Mammary epithelial cell (primary cell): ENCODE measurements at regions of chr2 and their contacts with region 1.

Region 1: DNA sequence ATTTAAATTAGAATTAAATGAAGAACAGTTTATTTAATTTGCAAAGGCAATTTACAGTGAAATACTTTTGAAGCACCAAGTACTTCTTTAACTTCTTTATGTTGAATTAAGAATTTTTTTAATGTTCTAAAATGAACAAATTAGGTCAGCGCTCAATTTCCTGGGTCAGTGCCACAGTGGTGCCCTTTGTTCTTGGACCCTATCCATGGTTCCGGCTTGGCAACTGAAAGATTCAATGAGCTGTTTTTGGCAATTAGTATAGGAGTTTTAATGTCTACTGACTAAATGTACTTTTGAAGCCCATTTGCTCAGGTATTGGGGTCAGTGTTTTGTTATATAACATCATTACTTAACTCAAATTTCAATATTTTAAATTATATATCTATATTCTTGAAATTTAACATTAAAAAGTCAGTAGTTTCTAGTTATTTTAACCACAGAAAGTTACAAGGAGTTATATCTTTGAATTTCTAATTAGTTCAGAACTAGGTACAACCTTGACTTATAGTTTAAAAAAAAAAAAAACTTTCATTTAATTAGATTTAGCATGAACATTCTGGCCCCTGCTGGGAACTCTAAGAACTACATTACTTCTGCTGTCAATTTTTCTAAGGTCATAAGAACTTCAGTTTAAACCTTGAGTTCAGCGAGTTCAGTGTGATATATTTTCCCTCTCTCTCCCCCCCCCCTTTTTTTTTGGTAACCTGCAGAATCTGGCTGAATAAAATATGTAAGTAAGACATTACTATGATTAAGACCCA is 7.6 kb upstream of the MSTN start:
- DNase-seq: peak; percentile 32
- H3K4me3 ChIP-seq: no peak overlapping the region
- H3K27ac ChIP-seq: no peak overlapping the region
- H3K4me1 ChIP-seq: no peaks in the 10 kb centered on the region
- H3K27me3 ChIP-seq: no peaks in the 10 kb centered on the region
- CTCF ChIP-seq: peak; percentile 52 to 63

Region 2: DNA sequence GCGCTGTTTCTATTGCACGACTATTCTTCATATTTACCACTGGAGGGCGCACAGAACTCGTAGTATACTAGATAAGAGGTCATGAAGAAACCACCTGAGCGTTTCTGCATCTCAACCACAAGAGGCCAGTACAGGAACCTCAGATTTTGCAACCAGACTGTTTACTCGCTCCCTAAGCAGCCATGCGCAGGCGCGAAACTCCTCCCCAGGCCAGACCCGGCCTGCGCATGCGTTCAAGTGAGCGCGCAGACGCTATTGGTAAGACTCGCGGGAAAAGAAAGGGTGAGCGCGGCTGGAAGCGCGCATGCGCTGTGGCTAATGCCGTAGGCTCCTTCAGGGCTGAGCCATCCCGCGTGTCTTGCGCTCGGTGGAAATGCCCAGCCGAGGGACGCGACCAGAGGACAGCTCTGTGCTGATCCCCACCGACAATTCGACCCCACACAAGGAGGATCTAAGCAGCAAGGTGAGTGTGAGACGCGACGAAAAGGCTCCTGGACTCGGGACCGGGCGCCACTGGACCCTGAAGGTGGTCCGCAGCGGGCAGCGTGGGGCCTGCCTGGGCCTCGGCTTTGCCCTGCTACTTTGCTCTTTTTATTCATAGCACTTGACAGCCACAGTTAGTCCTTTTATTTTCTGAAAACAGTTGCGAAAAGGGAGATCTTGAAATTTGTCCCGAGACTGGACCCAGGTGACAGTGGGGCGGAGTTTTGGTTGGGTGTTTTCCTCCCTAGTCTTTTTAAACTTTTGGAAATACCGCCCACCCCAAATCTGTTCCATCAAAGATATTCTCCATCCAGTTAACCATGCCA is 408.8 kb before region 1 on chr2 and contains the start of gene ASNSD1:
- CTCF ChIA-PET with region 1: no interaction called
- dilution Hi-C with region 1: no loop called
- in situ Hi-C with region 1: loop called in 1 of 2 experiments (anchors 25 kb)
- intact Hi-C with region 1: loop called (anchors 1 kb)
- DNase-seq: peak; percentile 99
- H3K4me3 ChIP-seq: peak within 1 kb of the TSS; percentile 70 to 98 (median 94)
- H3K27ac ChIP-seq: peak within 1 kb of the TSS; percentile 86
- H3K4me1 ChIP-seq: peaks cover 5% of the 10 kb centered on the region
- H3K27me3 ChIP-seq: peaks cover 2% of the 10 kb centered on the region
- CTCF ChIP-seq: peak; percentile 98 to 99
- total RNA-seq, gene ASNSD1: 24.2 to 43.3 TPM

Region 3: DNA sequence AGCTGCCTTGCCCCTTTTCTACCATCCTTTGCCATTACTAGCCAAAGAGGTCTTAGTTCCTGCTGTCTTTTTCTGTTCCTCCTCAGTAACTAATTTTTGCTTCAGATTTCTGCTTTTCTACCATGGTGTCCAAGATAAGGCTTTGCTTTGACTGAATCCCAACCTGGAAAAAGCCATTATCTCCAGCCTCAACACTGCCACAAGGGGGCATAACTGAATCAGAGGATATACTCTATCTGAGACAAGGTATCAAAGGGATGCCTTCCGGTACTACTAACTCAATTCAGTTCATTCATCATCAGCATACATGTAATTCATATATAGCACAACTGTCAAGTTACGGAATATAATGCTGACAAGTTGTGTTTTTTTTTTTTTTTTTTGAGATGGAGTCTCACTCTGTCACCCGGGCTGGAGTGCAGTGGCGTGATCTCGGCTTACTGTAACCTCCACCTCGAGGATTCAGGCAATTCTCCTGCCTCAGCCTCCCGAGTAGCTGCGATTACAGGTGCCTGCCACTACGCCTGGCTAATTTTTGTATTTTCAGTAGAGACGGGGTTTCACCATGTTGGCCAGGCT is 318.9 kb before region 1 on chr2:
- CTCF ChIA-PET with region 1: no interaction called
- dilution Hi-C with region 1: no loop called
- in situ Hi-C with region 1: no loop called
- intact Hi-C with region 1: loop called (anchors 2 kb)
- DNase-seq: peak; percentile 20
- H3K4me3 ChIP-seq: no peak overlapping the region
- H3K27ac ChIP-seq: no peak overlapping the region
- H3K4me1 ChIP-seq: no peaks in the 10 kb centered on the region
- H3K27me3 ChIP-seq: no peaks in the 10 kb centered on the region
- CTCF ChIP-seq: peak; percentile 75 to 77

Region 4: GRCh38 chr2:189762551-189763298 is 307.4 kb before region 1 on chr2 and contains the start of gene OSGEPL1:
- CTCF ChIA-PET with region 1: interaction called, 10 read pairs
- dilution Hi-C with region 1: no loop called
- in situ Hi-C with region 1: no loop called
- intact Hi-C with region 1: no loop called
- DNase-seq: peak; percentile 94
- H3K4me3 ChIP-seq: peak within 1 kb of the TSS; percentile 66 to 96 (median 92)
- H3K27ac ChIP-seq: peak within 1 kb of the TSS; percentile 70
- H3K4me1 ChIP-seq: peaks cover 6% of the 10 kb centered on the region
- H3K27me3 ChIP-seq: no peaks in the 10 kb centered on the region
- CTCF ChIP-seq: peak; percentile 26 to 65
- total RNA-seq, gene OSGEPL1: 4.6 to 8.8 TPM

Region 5: DNA sequence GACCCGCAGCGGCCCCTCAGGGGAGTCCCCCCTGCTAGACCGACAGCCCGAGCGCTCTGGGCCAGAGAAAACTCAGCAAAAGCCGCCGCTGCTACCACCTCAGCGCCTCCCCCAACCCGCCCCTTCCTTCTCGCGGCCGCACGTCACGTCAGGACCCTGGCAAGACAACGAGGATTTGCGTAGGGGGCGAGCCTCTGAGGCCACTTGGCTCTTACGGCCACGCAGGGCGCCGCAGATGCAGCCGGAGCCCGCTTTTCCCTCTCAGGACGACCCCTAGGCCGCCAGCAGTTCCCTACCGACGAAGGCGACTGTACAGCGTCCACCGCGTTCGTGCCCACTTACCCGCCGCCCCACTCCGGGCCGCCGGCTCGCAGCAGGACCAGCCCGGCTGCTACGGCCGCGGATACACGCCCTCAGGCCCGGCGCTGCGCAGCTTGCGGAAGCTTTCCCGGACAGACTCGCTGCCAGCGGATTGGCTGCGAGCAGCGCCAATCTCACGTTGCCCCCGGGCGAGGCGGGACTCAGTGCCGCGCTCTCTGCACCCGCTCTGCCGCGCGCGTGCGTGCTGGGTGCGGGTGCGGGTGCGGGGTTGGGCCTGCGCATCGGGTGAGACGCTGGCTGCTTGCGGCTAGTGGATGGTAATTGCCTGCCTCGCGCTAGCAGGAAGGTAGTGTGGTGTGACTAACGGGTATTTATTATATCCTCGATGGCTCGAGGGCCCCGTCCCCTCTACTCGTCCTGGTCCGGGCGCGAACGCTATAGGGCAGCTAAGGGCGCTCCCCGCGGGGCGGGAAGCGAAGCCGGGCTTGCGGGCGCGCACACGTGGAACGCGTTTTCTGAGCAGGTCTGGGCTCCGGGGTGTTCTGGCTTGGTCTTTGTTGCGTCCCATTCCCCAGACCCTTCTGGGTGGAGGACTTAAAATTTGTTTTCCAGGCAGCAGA is 285.9 kb before region 1 on chr2 and contains the starts of genes ORMDL1 and PMS1:
- CTCF ChIA-PET with region 1: no interaction called
- dilution Hi-C with region 1: no loop called
- in situ Hi-C with region 1: loop called in 1 of 2 experiments (anchors 25 kb)
- intact Hi-C with region 1: no loop called
- DNase-seq: peak; percentile 96
- H3K4me3 ChIP-seq: peak within 1 kb of the TSS; percentile 77 to 93 (median 84)
- H3K27ac ChIP-seq: peak within 1 kb of the TSS; percentile 72
- H3K4me1 ChIP-seq: peaks cover 17% of the 10 kb centered on the region
- H3K27me3 ChIP-seq: no peaks in the 10 kb centered on the region
- CTCF ChIP-seq: no peak
- total RNA-seq, gene ORMDL1: 44.3 to 56.2 TPM
- total RNA-seq, gene PMS1: 21.2 to 26.3 TPM

Region 6: GRCh38 chr2:189798312-189799029 is 271.6 kb before region 1 on chr2:
- CTCF ChIA-PET with region 1: no interaction called
- dilution Hi-C with region 1: no loop called
- in situ Hi-C with region 1: loop called in 1 of 2 experiments (anchors 25 kb)
- intact Hi-C with region 1: loop called (anchors 2 kb)
- DNase-seq: peak; percentile 25
- H3K4me3 ChIP-seq: no peak overlapping the region
- H3K27ac ChIP-seq: no peak overlapping the region
- H3K4me1 ChIP-seq: peaks cover 14% of the 10 kb centered on the region
- H3K27me3 ChIP-seq: no peaks in the 10 kb centered on the region
- CTCF ChIP-seq: peak; percentile 49 to 54

Region 7: DNA sequence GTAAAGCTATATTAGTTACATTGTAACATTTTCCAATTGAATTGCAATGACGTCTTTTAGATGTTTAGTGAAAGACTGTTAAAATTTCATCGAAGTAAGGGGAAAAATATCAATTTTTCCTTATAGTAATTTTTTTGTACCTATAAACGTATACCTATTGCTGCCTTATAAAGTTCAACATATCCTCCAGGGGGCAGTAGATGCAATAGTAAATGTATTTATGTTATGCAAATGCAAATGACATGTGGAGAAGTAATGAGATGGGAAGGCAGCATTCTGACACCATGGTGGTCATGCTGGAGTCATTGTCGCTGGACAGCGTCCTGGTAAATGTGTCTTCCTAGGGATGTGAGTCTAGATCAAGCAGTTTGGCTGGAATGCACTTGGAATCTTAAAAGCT is 46.3 kb before region 1 on chr2:
- CTCF ChIA-PET with region 1: no interaction called
- dilution Hi-C with region 1: no loop called
- in situ Hi-C with region 1: no loop called
- intact Hi-C with region 1: loop called (anchors 1 kb)
- DNase-seq: peak; percentile 45
- H3K4me3 ChIP-seq: no peak overlapping the region
- H3K27ac ChIP-seq: no peak overlapping the region
- H3K4me1 ChIP-seq: no peaks in the 10 kb centered on the region
- H3K27me3 ChIP-seq: no peaks in the 10 kb centered on the region
- CTCF ChIP-seq: peak; percentile 61 to 63